Caco-2 (cell line): ENCODE measurements at regions of chr10 and their contacts with region 1.

Region 1: DNA sequence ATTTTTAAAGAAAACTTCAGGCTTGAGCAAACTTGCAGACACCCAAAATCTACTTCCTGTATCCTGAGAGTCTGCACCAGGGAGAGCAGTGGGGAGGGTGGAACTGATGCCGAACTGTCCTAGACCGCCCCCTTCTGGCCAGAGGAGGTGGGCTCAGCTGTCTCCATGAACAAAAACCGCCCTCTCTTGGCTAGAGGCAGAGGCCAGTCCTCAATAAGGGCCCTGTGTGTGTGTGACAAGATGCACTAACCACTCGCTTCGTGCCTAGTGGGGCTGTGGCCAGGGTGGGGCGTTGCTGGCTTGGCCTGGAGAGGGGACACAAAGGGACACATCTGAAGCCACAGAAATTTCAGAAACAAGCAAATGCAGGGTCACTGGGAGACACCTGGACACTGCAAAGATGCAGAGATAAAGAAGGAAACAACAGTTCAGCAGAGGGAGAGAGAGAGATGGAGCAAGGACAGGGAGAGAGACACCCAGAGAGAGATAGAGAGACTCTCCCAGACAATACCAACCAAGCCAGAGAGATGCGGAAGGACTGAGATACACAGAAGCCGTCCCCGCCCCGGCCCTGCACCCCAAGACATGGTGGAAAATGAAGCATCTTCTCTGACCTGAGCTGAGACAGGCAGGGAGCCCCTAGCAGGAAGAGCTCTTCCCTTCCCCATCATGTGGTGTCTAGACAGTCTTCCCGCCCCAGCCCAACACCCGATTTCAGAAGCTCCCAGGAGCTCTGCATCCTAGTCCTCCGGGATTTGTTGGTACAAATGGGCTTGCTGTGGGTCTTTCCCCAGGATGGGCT is 22.7 kb upstream of the FXYD4 start:
- DNase-seq: peak; percentile 91 to 95
- H3K4me3 ChIP-seq: no peak overlapping the region
- H3K4me3 Mint-ChIP-seq: no peak overlapping the region
- H3K27ac Mint-ChIP-seq: peak overlapping the region; percentile 1
- H3K4me1 ChIP-seq: peaks cover 11% of the 10 kb centered on the region
- H3K4me1 Mint-ChIP-seq: peaks cover 10% of the 10 kb centered on the region
- H3K27me3 ChIP-seq: no peaks in the 10 kb centered on the region
- H3K27me3 Mint-ChIP-seq: no peaks in the 10 kb centered on the region
- CTCF ChIP-seq: peak; percentile 99 to 100

Region 2: GRCh38 chr10:43138021-43138756 is 210.5 kb before region 1 on chr10 and contains the start of gene CSGALNACT2:
- CTCF ChIA-PET with region 1: no interaction called
- POLR2A ChIA-PET with region 1: no interaction called
- intact Hi-C with region 1: no loop called
- DNase-seq: peak; percentile 76 to 87
- H3K4me3 ChIP-seq: peak within 1 kb of the TSS; percentile 95
- H3K4me3 Mint-ChIP-seq: peak within 1 kb of the TSS; percentile 91
- H3K27ac Mint-ChIP-seq: peak within 1 kb of the TSS; percentile 74
- H3K4me1 ChIP-seq: peaks cover 6% of the 10 kb centered on the region; the same call in 1 of the 2 replicates
- H3K4me1 Mint-ChIP-seq: peaks cover 12% of the 10 kb centered on the region
- H3K27me3 ChIP-seq: peaks cover 2% of the 10 kb centered on the region
- H3K27me3 Mint-ChIP-seq: peaks cover 2% of the 10 kb centered on the region
- CTCF ChIP-seq: no peak
- total RNA-seq, gene CSGALNACT2: 5.0 and 6.4 TPM in 2 replicates

Region 3: DNA sequence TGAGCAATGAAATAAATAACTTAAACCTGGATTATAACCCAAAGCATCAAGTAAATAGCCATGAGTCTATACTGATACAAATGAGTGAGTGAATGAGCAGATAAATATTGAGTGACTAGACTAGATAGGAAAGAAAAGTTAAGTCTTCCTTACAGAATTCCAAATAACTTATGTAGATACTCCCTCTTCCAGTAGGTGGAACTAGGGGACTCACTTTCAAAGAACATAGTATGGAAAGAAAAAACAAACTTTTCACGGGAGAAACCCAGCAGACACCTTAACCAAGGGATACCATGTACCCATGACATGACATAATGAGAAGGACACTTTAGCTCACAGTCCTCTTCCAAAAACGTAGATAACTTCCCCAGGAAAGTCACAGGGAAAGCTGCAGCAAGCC is 178.2 kb before region 1 on chr10:
- CTCF ChIA-PET with region 1: no interaction called
- POLR2A ChIA-PET with region 1: no interaction called
- intact Hi-C with region 1: loop called (anchors 1 kb)
- DNase-seq: peak in 1 of 2 experiments; percentile 16
- H3K4me3 ChIP-seq: no peak overlapping the region
- H3K4me3 Mint-ChIP-seq: no peak overlapping the region
- H3K27ac Mint-ChIP-seq: no peak overlapping the region
- H3K4me1 ChIP-seq: no peaks in the 10 kb centered on the region
- H3K4me1 Mint-ChIP-seq: no peaks in the 10 kb centered on the region
- H3K27me3 ChIP-seq: no peaks in the 10 kb centered on the region
- H3K27me3 Mint-ChIP-seq: no peaks in the 10 kb centered on the region
- CTCF ChIP-seq: peak; percentile 39 to 52

Region 4: DNA sequence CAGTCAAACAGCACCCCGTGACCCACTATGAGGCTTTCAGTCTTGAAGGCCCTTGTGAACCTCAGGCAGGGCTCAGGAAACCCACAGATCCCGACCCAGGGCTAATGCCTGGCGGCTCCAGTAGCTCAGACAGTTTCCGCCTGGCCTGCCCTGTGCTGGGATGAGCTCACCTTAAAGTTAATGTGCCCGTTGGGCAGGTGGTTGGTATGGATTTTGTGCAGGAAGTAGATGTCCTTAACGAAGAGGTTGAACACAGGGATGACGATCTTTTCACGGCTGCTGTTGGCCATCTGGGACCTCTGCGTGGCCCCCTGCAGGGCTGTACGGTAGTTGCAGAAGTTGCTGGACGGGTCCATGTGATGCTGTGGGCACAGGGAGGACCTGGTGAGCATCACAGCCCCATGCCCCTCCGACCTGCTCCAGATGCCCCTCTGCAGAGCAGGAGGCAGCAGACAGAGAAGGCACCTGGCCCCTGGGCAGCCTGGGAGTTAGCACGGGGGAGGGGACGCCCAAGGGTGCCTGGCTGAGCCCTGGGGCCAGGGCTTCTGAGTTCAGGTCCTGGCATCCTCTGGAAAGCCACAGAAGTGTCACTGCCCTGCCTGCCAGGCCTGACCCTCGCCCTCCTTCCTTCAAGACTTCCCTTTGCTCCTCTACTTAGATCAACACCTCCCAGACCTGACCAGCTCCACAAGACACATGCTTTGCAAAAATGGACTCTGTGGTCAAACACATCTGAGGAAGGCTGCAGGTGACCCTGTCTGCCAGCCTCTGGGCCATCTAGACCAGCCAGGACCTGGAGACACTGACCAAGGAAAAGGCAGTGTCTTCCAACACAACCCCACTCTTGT is 150.7 kb before region 1 on chr10:
- CTCF ChIA-PET with region 1: no interaction called
- POLR2A ChIA-PET with region 1: no interaction called
- intact Hi-C with region 1: loop called (anchors 2 kb)
- DNase-seq: peak; percentile 41 to 43
- H3K4me3 ChIP-seq: no peak overlapping the region
- H3K4me3 Mint-ChIP-seq: no peak overlapping the region
- H3K27ac Mint-ChIP-seq: no peak overlapping the region
- H3K4me1 ChIP-seq: no peaks in the 10 kb centered on the region
- H3K4me1 Mint-ChIP-seq: no peaks in the 10 kb centered on the region
- H3K27me3 ChIP-seq: no peaks in the 10 kb centered on the region
- H3K27me3 Mint-ChIP-seq: no peaks in the 10 kb centered on the region
- CTCF ChIP-seq: peak in 1 of 2 experiments; percentile 46

Region 5: DNA sequence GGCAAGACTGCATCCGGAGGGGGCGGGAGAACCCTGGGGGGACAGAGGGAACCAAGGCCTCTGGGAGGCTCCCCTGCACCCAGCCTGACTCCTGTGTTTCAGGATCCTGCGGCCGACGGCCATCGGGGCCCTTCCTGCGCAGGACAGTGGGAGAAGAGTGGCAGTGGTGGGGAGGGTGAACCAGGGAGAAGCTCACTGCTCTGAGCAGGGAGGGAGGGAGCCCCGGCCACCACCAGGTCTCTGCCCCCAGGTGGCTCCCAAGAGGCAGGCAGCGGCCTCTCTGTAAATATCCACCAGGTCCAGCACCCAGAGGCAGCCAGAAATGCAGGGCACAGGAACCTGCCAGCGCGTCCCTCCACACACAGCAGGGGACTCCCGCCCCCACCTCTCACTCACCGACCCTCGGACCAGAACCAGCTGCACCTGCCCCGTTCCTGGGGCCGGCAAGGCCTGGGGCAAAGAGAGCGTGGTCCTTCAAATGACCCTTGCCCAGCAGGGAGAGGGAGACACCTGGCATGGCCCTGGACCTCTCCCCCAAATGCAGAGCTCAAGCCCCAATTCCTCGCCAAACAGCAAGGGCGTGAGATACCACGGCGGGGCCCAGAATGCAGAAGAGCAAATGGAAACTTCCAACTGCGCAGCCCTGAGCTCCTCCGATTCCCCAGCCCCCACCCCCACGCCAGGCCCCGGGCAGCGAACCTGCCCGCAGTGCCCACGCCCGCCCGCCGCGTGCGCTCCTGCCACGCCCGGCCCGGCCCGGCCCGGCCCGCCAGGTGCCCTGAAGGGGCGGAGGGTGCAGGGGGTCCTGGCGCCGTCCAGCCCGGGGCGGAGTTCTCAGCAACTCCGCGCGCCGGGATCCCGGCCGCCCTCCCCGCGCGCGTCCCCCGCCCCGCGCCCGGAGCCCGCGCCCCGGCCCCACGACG is 82.7 kb before region 1 on chr10:
- CTCF ChIA-PET with region 1: interaction called, 33 read pairs
- POLR2A ChIA-PET with region 1: interaction called, 3 read pairs
- intact Hi-C with region 1: loop called (anchors 1 kb)
- DNase-seq: peak; percentile 80 to 86
- H3K4me3 ChIP-seq: peak overlapping the region; percentile 43
- H3K4me3 Mint-ChIP-seq: peak overlapping the region; percentile 73
- H3K27ac Mint-ChIP-seq: no peak overlapping the region
- H3K4me1 ChIP-seq: no peaks in the 10 kb centered on the region
- H3K4me1 Mint-ChIP-seq: no peaks in the 10 kb centered on the region
- H3K27me3 ChIP-seq: peaks cover 9% of the 10 kb centered on the region
- H3K27me3 Mint-ChIP-seq: peaks cover 32% of the 10 kb centered on the region
- CTCF ChIP-seq: peak; percentile 83 to 88

Region 6: GRCh38 chr10:43282881-43283280 is 65.8 kb before region 1 on chr10:
- CTCF ChIA-PET with region 1: no interaction called
- POLR2A ChIA-PET with region 1: no interaction called
- intact Hi-C with region 1: no loop called
- DNase-seq: peak; percentile 69 to 78
- H3K4me3 ChIP-seq: no peak overlapping the region
- H3K4me3 Mint-ChIP-seq: no peak overlapping the region
- H3K27ac Mint-ChIP-seq: no peak overlapping the region
- H3K4me1 ChIP-seq: no peaks in the 10 kb centered on the region
- H3K4me1 Mint-ChIP-seq: peaks cover 7% of the 10 kb centered on the region
- H3K27me3 ChIP-seq: no peaks in the 10 kb centered on the region
- H3K27me3 Mint-ChIP-seq: peaks cover 15% of the 10 kb centered on the region
- CTCF ChIP-seq: no peak

Region 7: DNA sequence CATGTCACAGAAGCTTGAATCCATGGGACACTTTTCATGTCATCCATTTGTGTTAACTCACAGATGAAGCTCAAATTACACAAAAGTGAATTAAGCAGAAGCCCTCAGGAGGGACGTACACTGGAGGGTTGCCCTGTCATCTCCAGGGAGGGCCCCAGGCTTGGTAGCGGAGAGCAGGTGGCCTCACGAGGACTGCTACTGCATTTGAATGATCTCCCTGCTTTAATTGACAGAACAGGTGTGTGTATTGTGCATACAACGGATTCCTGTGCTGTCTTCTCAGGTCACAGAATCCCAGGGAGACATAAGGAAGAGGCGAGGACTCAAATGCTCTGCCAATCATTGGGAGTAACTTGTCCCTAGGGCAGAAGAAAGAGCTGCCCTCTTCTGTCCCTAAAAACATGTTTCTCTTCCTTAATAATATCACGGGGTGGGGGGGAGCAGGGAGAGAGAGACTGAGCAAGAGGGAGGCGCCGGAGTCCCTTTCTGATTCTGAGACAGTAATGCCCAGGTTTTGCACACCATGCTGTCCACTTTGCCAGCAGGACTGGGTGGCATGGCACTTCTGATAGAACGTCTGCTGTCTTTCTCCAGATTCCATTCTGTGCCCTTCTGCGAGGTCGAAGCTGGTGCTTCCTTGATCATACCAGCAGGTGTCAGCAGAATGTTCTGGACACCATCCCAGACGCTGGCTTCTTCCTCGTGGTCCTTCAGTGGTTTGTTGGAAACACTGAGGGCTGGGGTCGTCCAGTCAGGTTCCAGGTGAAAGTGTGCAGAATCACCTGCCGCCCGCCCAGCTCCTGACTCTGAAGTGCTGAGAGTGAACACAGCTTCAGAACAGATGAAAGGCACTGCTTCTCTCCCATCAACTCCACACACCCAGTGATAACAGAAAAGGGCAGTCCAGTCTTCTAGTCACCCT is 55.7 kb before region 1 on chr10:
- CTCF ChIA-PET with region 1: interaction called, 42 read pairs
- POLR2A ChIA-PET with region 1: no interaction called
- intact Hi-C with region 1: loop called (anchors 1 kb)
- DNase-seq: peak; percentile 77
- H3K4me3 ChIP-seq: no peak overlapping the region
- H3K4me3 Mint-ChIP-seq: peak overlapping the region; percentile 14
- H3K27ac Mint-ChIP-seq: no peak overlapping the region
- H3K4me1 ChIP-seq: 0 out of 2 replicates have a peak, but pooled peaks cover 4% of the 10 kb centered on the region
- H3K4me1 Mint-ChIP-seq: no peaks in the 10 kb centered on the region
- H3K27me3 ChIP-seq: no peaks in the 10 kb centered on the region
- H3K27me3 Mint-ChIP-seq: peaks cover 5% of the 10 kb centered on the region
- CTCF ChIP-seq: peak; percentile 87 to 97

Region 8: DNA sequence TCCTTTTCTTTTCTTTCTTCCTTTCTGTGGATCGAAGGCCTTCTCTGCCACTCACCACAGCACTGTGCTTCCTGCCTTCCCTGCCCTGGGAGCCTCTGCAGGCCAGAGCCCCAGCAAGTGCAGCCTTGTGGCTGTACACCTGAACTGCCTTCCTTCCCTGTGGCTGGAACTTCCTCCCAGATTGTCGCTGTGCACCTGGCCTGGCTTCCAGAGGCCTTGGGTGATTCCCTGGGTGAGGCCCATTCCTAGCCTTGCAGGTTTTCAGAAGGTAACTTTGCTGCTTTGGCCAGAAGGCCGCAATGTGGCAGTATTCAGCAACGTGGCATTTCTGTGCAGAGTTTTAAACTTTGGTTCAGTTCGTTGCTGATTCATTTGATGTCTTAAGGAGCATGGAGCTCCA is 31.7 kb before region 1 on chr10:
- CTCF ChIA-PET with region 1: no interaction called
- POLR2A ChIA-PET with region 1: no interaction called
- intact Hi-C with region 1: loop called (anchors 1 kb)
- DNase-seq: peak; percentile 50 to 61
- H3K4me3 ChIP-seq: no peak overlapping the region
- H3K4me3 Mint-ChIP-seq: no peak overlapping the region
- H3K27ac Mint-ChIP-seq: peak overlapping the region; percentile 55
- H3K4me1 ChIP-seq: peaks cover 8% of the 10 kb centered on the region
- H3K4me1 Mint-ChIP-seq: peaks cover 13% of the 10 kb centered on the region
- H3K27me3 ChIP-seq: no peaks in the 10 kb centered on the region
- H3K27me3 Mint-ChIP-seq: no peaks in the 10 kb centered on the region
- CTCF ChIP-seq: peak; percentile 16 to 33

Region 9: DNA sequence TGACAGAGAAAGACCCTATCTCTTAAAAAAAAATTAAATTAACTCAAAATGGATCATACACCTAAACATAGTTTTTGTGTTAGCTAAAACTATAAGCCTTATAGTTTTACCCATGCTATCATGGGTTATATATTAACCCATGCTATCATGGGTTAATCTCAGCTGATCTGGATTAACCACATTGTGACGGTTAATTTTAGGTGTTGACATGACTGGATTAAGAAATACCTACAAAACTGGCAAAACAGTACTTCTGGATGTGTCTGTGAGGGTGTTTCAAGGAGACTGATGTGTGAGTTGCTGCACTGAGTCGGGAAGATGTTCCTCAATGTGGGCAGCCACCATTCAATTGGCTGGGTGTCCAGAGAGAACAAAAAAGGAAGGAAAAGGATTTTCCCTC is 21.5 kb before region 1 on chr10:
- CTCF ChIA-PET with region 1: no interaction called
- POLR2A ChIA-PET with region 1: no interaction called
- intact Hi-C with region 1: no loop called
- DNase-seq: no peak
- H3K4me3 ChIP-seq: no peak overlapping the region
- H3K4me3 Mint-ChIP-seq: no peak overlapping the region
- H3K27ac Mint-ChIP-seq: peak overlapping the region; percentile 18
- H3K4me1 ChIP-seq: peaks cover 31% of the 10 kb centered on the region
- H3K4me1 Mint-ChIP-seq: peaks cover 10% of the 10 kb centered on the region
- H3K27me3 ChIP-seq: no peaks in the 10 kb centered on the region
- H3K27me3 Mint-ChIP-seq: no peaks in the 10 kb centered on the region
- CTCF ChIP-seq: no peak